ENCODE measurements at regions of chr1 and their contacts with region 1.

Region 1: DNA sequence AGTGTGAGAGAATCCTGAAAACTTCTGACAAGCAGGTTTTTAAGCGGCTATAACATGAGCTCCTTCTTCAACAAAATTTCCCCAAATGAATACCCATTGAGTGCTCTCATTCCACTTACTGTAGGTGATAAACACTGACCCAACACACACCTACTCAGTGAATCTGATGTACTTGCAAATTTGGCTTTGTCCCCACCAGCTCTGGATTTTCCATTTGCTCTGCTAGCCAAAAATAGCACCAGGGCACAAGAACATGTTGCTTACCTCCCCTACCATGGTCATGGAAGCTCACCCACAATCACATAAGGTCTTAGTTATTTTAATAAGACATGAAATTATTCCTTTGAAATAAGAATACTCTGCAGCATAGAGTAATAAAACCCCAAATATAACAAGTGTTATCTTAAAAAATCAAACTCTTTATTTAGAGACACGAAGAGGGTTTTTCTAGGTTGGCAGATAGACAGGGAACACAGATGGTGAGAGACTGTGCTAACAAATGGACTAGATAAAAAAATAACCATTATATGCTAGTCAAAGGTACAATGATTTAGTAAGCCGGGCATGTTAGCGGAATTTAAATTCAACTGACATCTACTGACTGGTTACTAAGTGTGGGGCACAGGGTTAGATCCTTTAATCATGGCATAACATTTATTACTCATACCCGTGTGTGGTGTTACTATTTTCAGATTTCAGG is 291.9 kb downstream of the KCNH1 start:
- DNase-seq: no peak
- H3K4me3 ChIP-seq: no peak overlapping the region
- H3K4me3 Mint-ChIP-seq: no peak overlapping the region
- H3K27ac ChIP-seq: no peak overlapping the region
- H3K27ac Mint-ChIP-seq: no peak overlapping the region
- H3K4me1 ChIP-seq: no peaks in the 10 kb centered on the region
- H3K4me1 Mint-ChIP-seq: no peaks in the 10 kb centered on the region
- H3K27me3 ChIP-seq: no peaks in the 10 kb centered on the region
- H3K27me3 Mint-ChIP-seq: peaks cover 0 to 1% (median 0%) of the 10 kb centered on the region in 3 donors
- CTCF ChIP-seq: no peak

Region 2: DNA sequence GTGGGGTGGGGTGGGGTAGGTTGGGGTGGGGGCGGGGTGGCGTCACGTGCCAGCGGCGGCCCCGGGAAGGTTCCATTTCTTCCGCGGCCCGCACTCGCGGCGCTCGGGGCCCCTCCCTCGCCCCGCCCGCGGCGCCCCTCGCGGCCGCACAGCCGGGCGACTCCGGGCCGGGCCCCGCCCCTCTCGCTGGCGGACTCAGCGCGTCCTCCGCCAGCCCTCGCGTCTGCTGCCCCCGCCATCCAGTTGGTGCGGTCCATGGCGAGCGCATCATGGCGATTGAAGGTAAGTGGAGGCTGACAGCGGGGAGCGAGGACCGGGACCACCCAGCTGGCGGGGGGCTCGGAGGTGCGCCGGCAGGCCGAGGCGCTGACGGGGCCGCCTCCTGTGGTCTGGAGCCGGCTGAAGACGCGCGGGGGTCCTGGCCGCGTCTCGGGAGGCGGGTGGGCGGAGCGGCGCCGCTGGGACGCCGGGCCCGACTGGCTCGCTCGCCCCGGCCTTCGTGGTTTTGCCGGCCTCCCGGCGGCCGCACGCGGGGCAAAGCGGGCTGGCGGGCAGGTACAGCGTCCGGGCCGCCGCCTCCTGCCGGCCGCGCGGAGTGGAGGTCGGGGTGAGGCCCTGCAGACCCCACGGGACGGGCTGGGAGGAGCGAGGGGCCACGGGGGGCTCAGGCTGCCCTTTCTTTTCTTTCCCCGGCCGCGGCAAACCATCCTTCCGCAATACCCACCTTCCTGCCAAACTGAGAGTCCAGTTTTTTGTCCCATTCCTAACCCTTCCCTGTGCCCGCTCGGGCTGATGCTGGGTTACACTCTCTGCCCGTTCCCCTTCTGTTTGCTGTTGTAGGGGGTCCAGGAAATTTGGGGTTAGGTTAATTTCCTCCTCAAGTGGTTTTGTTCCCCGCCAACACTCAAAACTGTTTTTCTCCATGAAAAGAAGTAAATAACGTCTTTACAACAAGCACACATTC is 903.8 kb before region 1 on chr1 and contains the start of gene SYT14:
- intact Hi-C with region 1: no loop called
- DNase-seq: no peak
- H3K4me3 ChIP-seq: no peak within 1 kb of the TSS
- H3K4me3 Mint-ChIP-seq: peak within 1 kb of the TSS; percentile 17 to 88
- H3K27ac ChIP-seq: no peak within 1 kb of the TSS
- H3K27ac Mint-ChIP-seq: no peak within 1 kb of the TSS
- H3K4me1 ChIP-seq: no peaks in the 10 kb centered on the region
- H3K4me1 Mint-ChIP-seq: peaks cover 4% of the 10 kb centered on the region
- H3K27me3 ChIP-seq: peaks cover 31 to 37% of the 10 kb centered on the region in 2 donors
- H3K27me3 Mint-ChIP-seq: peaks cover 28 to 48% (median 37%) of the 10 kb centered on the region in 3 donors
- CTCF ChIP-seq: no peak
- polyA plus RNA-seq, gene SYT14: not detected

Region 3: GRCh38 chr1:210448297-210448892 is 393.7 kb before region 1 on chr1:
- intact Hi-C with region 1: loop called in 1 of 2 experiments (anchors 5 kb)
- DNase-seq: no peak
- H3K4me3 ChIP-seq: no peak overlapping the region
- H3K4me3 Mint-ChIP-seq: no peak overlapping the region
- H3K27ac ChIP-seq: no peak overlapping the region
- H3K27ac Mint-ChIP-seq: no peak overlapping the region
- H3K4me1 ChIP-seq: no peaks in the 10 kb centered on the region
- H3K4me1 Mint-ChIP-seq: no peaks in the 10 kb centered on the region
- H3K27me3 ChIP-seq: no peaks in the 10 kb centered on the region
- H3K27me3 Mint-ChIP-seq: no peaks in the 10 kb centered on the region
- CTCF ChIP-seq: peak; percentile 23